AG04449 (cell line): ENCODE measurements at regions of chr6 and their contacts with region 1.

Region 1: DNA sequence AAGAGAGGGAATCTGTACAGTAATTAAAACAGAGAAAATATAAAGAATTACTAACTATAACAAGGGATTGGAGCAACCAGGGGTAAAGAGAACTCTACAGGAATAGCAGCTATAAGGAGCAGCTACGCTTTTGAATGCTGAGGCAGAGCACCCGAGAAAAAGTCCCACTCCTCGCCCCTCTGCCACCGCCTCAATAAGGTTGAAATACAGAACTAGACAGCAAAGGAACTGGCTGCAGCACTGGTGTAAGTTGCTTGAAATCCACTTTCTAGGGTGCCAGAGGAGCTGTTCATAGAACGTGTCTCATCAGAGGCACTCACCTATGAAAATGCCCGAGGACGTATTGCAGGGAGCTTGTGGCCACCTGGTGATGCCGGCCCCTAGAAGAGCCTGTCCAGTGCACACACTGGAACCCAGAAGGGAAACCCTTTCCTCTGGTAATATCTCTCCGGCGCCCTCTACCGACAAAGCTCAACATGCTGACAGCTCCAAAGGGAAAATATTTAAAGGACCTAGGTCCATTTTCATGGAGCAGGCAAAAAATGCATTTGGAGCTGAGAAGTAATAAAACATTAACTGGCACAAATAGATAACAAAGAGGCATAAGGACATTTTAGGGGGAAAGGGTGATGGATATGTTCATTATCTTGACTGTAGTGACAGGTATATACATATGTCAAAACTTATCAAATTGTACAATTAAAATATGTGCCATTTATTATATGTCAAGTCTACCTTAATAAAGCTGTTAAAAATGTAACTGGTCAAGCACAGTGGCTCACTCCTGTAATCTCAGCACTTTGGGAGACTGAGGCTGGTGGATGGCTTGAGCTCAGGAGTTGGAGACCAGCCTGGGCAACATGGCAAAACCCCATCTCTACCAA is 137.4 kb upstream of the HDAC2 start:
- DNase-seq: no peak
- H3K4me3 ChIP-seq: no peak overlapping the region
- CTCF ChIP-seq: peak; percentile 73

Region 2: DNA sequence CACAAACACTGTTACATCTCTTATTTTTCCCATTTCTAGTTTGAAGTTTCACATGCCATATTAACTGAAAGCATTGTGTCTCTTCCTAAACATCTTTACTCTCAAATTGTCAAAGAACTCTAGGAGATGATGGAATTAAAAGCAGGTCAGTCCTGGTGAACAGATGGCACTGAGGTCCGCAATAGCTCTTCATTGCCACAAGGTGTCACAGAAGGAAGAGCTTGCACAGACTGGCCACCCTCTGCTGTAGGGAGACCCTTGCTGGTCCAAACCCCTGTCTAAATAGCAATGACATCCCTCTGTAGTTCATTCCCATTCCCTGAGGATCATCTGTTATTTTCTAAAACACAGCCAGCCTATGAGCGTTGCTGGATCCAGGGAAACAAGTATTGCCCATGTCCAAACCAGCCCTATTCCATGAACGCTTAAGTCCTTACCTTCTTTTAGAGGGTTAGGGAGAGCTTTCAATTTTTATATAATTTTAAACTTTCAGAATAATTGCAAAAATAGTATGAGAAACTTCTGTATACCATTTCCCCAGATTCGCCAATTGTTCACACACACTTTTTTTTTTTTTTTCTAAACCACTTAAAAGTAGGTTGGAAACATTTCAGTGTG is 127.3 kb before region 1 on chr6:
- CTCF ChIA-PET with region 1: interaction called, 32 read pairs
- POLR2A ChIA-PET with region 1: no interaction called
- DNase-seq: no peak
- H3K4me3 ChIP-seq: no peak overlapping the region
- CTCF ChIP-seq: peak; percentile 35

Region 3: GRCh38 chr6:114061116-114061515 is 47.2 kb before region 1 on chr6:
- CTCF ChIA-PET with region 1: interaction called, 10 read pairs
- POLR2A ChIA-PET with region 1: no interaction called
- DNase-seq: no peak
- H3K4me3 ChIP-seq: no peak overlapping the region
- CTCF ChIP-seq: no peak

Region 4: DNA sequence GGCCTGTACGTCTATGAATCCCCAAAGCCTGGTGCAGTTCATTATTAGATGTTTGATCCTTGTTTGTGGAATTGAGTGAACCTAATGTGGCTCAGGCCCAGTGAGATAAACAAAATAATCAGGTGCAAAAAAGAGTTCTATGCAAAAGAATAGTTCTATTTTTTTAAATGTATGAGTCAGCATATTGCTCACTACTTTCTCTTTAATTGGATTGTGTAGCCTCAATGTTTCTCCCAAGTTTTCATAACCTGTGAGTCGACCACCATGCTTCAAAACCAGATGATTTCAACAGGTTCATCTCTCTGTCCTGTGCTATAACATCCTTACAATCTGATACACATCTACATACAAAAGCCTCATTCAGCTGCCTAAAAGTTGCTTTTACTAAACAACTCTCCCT is 20.9 kb before region 1 on chr6:
- CTCF ChIA-PET with region 1: interaction called, 26 read pairs
- POLR2A ChIA-PET with region 1: no interaction called
- DNase-seq: no peak
- H3K4me3 ChIP-seq: no peak overlapping the region
- CTCF ChIP-seq: no peak

Region 5: GRCh38 chr6:114121913-114122645 is 13.7 kb after region 1 on chr6:
- CTCF ChIA-PET with region 1: interaction called, 24 read pairs
- POLR2A ChIA-PET with region 1: no interaction called
- DNase-seq: no peak
- H3K4me3 ChIP-seq: no peak overlapping the region
- CTCF ChIP-seq: no peak

Region 6: DNA sequence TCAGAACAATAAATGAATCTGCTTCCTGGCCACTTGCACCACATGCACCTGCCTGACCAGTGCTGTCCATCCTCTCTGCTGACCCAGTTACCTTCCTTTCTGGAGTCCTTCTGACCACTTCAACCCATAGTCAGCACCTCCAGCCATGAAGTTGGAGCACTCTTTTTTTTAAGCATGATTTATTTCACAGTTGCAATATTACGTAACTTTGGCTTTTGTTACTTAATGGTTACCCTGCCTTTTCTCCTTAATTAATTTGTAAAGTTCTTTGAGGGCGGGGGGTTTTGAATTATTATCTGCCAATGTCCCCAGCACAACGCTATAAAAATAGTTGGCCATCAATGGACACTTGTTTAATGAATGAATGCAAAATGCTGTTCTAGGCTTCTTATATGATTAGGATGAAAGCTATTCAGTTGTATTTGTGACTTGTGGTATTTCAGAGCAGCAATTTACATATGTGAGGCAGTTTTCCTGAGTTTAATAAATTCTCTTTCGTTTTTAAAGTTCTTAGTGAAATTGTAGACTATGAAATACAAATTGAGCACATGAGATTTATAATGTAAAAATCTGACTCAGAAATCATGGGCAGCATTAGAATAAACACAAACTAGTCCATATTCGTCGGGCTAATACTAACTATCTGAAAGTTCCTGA is 54.5 kb after region 1 on chr6:
- CTCF ChIA-PET with region 1: no interaction called
- POLR2A ChIA-PET with region 1: no interaction called
- DNase-seq: no peak
- H3K4me3 ChIP-seq: no peak overlapping the region
- CTCF ChIP-seq: no peak